PC-9 (cell line): ENCODE measurements at regions of chr11 and their contacts with region 1.

Region 1: DNA sequence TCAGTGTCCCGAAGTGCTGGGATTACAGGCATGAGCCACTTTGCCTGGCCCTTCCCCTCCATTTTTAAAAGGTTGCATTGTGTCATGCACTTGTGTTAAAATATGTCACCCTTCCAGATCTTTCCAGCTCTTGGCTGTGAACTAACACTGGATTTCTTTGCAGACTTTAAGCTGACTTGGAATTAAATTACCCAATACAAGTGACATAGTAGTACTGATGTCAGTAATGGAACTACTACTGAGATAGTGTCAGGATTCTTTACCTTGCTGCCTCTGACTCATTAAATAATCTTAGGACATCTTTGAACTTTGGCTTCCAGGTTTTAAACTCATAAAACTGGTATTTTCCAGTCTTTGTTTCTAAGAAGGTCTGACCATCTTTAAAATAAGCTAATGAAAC is 51.8 kb upstream of the OR4B1 start:
- DNase-seq: peak in 1 of 2 experiments; percentile 72
- H3K4me3 ChIP-seq: no peak overlapping the region
- H3K27ac ChIP-seq: no peak overlapping the region
- H3K4me1 ChIP-seq: 0 out of 2 replicates have a peak, but pooled peaks cover 3% of the 10 kb centered on the region
- H3K27me3 ChIP-seq: no peaks in the 10 kb centered on the region
- CTCF ChIP-seq: no peak

Region 2: GRCh38 chr11:47786373-47786772 is 378.4 kb before region 1 on chr11:
- CTCF ChIA-PET with region 1: interaction called, 15 read pairs
- POLR2A ChIA-PET with region 1: no interaction called
- intact Hi-C with region 1: no loop called
- DNase-seq: no peak
- H3K4me3 ChIP-seq: no peak overlapping the region
- H3K27ac ChIP-seq: no peak overlapping the region
- H3K4me1 ChIP-seq: no peaks in the 10 kb centered on the region
- H3K27me3 ChIP-seq: no peaks in the 10 kb centered on the region
- CTCF ChIP-seq: no peak

Region 3: DNA sequence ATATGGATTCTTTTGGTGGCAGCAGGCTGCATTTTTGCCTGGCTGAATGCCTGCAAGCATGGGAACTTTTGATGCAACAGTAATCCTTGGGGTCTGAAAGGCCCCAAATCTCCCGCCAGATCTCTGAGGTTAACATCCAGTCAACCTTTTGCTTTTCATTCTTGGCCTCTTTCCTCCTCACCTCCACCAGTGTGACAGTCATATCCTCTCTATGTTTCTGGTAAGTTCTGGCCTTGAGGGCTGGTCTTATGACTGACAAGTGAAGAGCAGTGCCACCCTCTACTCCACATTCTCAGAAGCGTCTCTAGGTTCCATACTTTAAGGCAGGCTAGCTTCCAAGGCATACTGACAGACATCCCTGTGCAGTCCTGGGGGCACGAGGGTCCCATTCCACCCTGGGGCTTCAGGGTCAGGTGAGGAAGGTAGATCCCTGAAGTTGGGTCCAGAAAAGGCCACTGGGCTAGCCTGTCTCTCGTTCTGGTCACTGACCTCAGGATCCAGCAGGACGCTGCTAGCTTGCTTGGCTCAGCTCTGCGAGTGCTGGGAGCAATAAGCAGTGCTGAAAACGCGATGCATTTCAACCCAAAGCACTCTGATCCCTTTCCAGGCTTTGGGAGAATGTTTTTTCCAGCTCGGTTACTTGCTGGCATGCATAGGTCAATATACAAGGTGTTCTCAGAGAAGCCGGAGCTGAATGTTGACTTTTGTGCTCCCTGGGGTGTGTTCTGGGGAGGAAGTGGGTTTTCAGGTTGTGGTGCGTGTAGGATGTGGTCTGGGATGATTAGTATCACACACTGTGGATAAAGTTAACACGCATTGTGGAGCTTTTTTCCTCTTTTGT is 109.3 kb before region 1 on chr11:
- CTCF ChIA-PET with region 1: no interaction called
- POLR2A ChIA-PET with region 1: no interaction called
- intact Hi-C with region 1: no loop called
- DNase-seq: peak; percentile 81 to 100
- H3K4me3 ChIP-seq: peak overlapping the region; percentile 46; the same call in 1 of the 2 replicates
- H3K27ac ChIP-seq: peak overlapping the region; percentile 96
- H3K4me1 ChIP-seq: peaks cover 91% of the 10 kb centered on the region
- H3K27me3 ChIP-seq: no peaks in the 10 kb centered on the region
- CTCF ChIP-seq: no peak